ENCODE measurements at regions of chr22 and their contacts with region 1.

Region 1: DNA sequence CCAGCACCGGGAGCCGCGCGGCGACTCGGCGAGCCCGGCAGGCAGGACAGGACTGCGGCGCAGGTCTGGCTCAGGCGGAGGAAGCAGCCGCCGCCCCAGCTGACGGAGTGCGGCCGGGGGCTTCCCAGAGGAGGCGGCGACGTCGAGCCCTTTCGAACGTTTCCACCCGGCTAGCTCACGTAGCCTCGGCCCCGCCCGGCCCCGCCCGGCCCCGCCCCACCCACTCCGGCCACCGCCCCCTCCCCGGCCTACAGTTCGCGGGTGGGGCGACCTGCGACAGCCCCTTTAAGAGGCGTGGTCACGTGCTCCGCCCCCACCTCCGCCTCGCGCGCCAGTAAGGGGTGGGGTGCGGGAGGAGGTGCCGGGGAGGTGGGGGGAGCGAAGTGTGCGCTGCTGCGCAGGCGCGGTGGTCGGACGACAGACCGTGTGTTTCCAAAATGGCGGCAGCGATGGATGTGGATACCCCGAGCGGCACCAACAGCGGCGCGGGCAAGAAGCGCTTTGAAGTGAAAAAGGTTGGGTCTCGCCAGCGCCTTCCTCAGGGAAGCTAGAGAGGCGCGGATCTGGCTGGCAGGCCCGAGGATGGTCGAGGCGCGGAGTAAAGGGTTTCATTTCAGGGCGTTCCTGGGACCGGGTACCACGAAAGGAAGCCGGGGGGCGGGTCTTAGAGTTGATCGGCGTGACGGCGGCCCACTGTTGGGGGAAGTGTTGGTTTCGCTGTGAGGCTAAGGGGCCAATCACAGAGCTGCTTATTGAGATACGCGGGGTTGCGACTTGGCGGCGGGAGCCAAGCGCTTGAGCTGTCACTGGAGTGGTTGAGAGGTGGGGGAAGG is at the start of gene RBX1:
- DNase-seq: peak; percentile 99
- ATAC-seq: peak; percentile 83
- H3K4me3 Mint-ChIP-seq: peak within 1 kb of the TSS; percentile 100
- H3K27ac Mint-ChIP-seq: peak within 1 kb of the TSS; percentile 100
- H3K4me1 Mint-ChIP-seq: peaks cover 23% of the 10 kb centered on the region
- H3K27me3 Mint-ChIP-seq: no peaks in the 10 kb centered on the region
- total RNA-seq, gene RBX1: 49.9 to 96.6 TPM

Region 2: GRCh38 chr22:40368016-40368415 is 583.2 kb before region 1 on chr22:
- CTCF ChIA-PET with region 1: no interaction called
- POLR2A ChIA-PET with region 1: no interaction called
- intact Hi-C with region 1: loop called in 1 of 2 experiments (anchors 1 kb)
- DNase-seq: no peak
- ATAC-seq: no peak
- H3K4me3 Mint-ChIP-seq: no peak overlapping the region
- H3K27ac Mint-ChIP-seq: no peak overlapping the region
- H3K4me1 Mint-ChIP-seq: peaks cover 19% of the 10 kb centered on the region
- H3K27me3 Mint-ChIP-seq: no peaks in the 10 kb centered on the region

Region 3: DNA sequence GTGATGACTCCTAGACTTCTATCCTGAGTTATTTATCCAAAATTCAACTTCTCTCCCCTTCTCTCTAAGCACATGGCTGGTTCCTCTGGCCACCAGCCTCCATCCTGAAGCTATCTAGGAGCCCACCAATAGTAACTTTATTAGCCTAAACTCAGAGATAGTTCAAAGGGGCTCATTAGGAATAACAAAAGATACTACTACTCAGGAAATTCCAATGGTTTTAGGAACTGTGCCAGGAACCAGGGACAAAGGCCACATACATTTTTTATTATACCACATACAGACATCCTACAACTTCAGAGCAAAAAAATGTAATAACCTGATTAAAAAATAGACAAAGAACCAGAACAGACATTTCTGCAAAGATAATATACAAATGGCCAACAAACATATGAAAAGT is 159.9 kb before region 1 on chr22:
- CTCF ChIA-PET with region 1: no interaction called
- POLR2A ChIA-PET with region 1: no interaction called
- intact Hi-C with region 1: no loop called
- DNase-seq: no peak
- ATAC-seq: no peak
- H3K4me3 Mint-ChIP-seq: no peak overlapping the region
- H3K27ac Mint-ChIP-seq: no peak overlapping the region
- H3K4me1 Mint-ChIP-seq: peaks cover 10% of the 10 kb centered on the region
- H3K27me3 Mint-ChIP-seq: no peaks in the 10 kb centered on the region

Region 4: GRCh38 chr22:40911772-40912171 is 39.4 kb before region 1 on chr22:
- CTCF ChIA-PET with region 1: no interaction called
- POLR2A ChIA-PET with region 1: no interaction called
- intact Hi-C with region 1: no loop called
- DNase-seq: no peak
- ATAC-seq: no peak
- H3K4me3 Mint-ChIP-seq: no peak overlapping the region
- H3K27ac Mint-ChIP-seq: no peak overlapping the region
- H3K4me1 Mint-ChIP-seq: no peaks in the 10 kb centered on the region
- H3K27me3 Mint-ChIP-seq: no peaks in the 10 kb centered on the region

Region 5: DNA sequence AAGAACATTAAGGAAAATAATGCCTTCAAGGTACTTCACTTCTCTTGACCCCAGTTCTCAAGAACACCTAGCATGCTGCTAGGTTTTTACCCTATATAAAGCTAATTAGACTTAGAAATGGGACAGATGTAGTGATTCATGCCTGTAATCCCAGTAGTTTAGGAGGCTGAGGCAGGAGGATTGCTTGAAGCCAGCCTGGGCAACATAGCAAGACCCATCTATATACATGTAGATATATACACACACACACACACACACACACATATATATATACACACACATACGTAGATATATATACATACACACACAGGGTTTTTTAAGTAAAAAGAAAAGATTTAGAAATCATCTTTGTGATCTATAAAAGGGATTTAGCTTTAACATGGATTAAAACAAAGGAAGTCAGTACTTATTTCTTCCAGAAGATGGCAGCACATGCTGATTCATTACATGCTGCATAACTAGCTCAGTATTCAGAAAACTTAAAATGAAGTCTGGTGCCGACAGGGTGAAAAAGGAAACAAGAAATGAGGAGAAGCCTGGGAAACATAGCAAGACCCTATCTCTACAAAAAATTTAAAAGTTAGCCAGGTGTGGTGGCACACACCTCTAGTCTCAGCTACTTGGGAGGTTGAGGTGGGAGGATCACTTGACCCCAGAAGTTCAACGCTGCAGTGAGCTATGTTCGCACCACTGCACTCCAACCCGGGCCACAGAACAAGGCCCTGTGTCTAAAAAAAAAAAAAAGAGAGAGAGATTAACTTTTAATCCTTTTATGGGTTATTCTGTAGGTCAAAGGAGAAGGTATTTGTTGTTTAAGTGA is 28.5 kb before region 1 on chr22:
- CTCF ChIA-PET with region 1: interaction called, 17 read pairs
- POLR2A ChIA-PET with region 1: interaction called, 6 read pairs
- intact Hi-C with region 1: no loop called
- DNase-seq: no peak
- ATAC-seq: peak; percentile 86
- H3K4me3 Mint-ChIP-seq: peak overlapping the region; percentile 29
- H3K27ac Mint-ChIP-seq: no peak overlapping the region
- H3K4me1 Mint-ChIP-seq: peaks cover 4% of the 10 kb centered on the region
- H3K27me3 Mint-ChIP-seq: no peaks in the 10 kb centered on the region

Region 6: DNA sequence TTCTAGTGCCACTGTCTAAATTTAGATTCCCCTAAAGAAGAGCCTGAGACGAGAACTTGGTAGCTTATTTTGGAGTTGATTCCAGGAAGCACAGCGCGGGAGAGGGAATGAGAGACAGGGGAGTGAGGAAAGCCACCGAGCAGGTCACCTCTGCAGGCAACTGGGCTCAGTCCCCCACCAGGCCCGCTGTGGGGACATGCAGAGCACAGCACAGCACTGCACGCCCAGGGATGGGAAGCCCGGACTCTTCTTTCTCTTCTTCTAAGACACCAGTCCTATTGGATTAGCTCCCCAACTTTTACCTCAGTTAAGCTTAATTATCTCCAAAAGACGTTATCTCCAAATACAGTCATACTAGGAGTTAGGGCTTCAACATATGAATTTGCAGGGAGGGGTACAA is 28.7 kb after region 1 on chr22:
- CTCF ChIA-PET with region 1: no interaction called
- POLR2A ChIA-PET with region 1: no interaction called
- intact Hi-C with region 1: no loop called
- DNase-seq: no peak
- ATAC-seq: no peak
- H3K4me3 Mint-ChIP-seq: no peak overlapping the region
- H3K27ac Mint-ChIP-seq: no peak overlapping the region
- H3K4me1 Mint-ChIP-seq: no peaks in the 10 kb centered on the region
- H3K27me3 Mint-ChIP-seq: no peaks in the 10 kb centered on the region

Region 7: GRCh38 chr22:41197038-41197972 is 246.1 kb after region 1 on chr22:
- CTCF ChIA-PET with region 1: no interaction called
- POLR2A ChIA-PET with region 1: no interaction called
- intact Hi-C with region 1: loop called (anchors 1 to 10 kb)
- DNase-seq: peak; percentile 89
- ATAC-seq: peak; percentile 82
- H3K4me3 Mint-ChIP-seq: peak overlapping the region; percentile 77
- H3K27ac Mint-ChIP-seq: no peak overlapping the region
- H3K4me1 Mint-ChIP-seq: peaks cover 11% of the 10 kb centered on the region
- H3K27me3 Mint-ChIP-seq: no peaks in the 10 kb centered on the region

Region 8: DNA sequence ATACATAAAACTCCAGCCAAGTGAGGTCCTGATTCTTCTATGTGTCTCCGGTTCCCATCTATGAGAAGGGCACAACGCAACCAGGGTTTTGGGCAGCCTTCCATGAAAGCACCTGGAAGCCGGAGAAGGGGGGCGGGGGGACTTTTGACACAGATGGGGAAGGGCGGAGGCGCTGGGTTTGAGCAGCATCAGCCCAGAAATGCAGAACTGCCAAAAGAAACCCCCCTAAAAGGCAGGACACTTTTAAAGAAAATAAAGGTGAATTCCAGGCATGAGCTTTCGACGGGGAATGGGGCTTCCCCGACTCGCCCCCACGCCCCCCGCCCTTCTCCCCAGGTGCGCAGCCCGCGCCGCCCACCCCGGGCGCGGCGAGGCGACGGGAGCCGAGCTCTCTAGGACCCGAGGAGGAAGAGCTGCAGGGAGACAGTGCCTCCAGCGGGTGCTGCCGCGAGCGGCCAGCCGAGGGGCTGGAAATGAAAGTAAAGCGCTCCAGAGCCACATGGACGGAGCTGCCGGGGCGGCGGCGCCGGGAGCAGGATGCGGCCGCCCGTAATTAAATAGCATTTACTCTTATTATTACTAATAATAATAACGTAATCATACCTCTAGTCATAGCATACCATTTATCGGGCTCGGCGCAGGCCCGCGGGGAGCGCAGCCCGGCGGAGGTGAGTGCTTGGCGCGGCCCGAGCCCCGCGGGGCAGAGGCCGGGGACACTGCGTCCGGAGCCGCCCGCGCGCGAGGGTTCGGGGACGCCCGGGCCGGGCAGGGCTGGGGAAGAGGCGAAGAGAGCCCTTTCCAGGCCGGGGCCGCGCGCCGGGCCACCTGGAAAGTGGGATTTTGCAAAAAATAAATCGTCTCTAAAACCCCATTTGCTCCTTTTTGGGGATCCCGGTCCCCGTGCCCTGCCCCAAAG is 350.2 kb after region 1 on chr22 and contains the start of gene ZC3H7B:
- CTCF ChIA-PET with region 1: no interaction called
- POLR2A ChIA-PET with region 1: no interaction called
- intact Hi-C with region 1: loop called in 1 of 2 experiments (anchors 1 kb)
- DNase-seq: peak; percentile 92
- ATAC-seq: peak; percentile 96
- H3K4me3 Mint-ChIP-seq: peak within 1 kb of the TSS; percentile 74
- H3K27ac Mint-ChIP-seq: peak within 1 kb of the TSS; percentile 76
- H3K4me1 Mint-ChIP-seq: peaks cover 31% of the 10 kb centered on the region
- H3K27me3 Mint-ChIP-seq: no peaks in the 10 kb centered on the region
- total RNA-seq, gene ZC3H7B: 41.7 to 43.4 TPM

Region 9: GRCh38 chr22:41543854-41544670 is 592.9 kb after region 1 on chr22 and contains the start of gene POLR3H:
- CTCF ChIA-PET with region 1: no interaction called
- POLR2A ChIA-PET with region 1: no interaction called
- intact Hi-C with region 1: loop called in 1 of 2 experiments (anchors 1 kb)
- DNase-seq: peak; percentile 99
- ATAC-seq: peak; percentile 99
- H3K4me3 Mint-ChIP-seq: peak within 1 kb of the TSS; percentile 81
- H3K27ac Mint-ChIP-seq: peak within 1 kb of the TSS; percentile 90
- H3K4me1 Mint-ChIP-seq: peaks cover 40% of the 10 kb centered on the region
- H3K27me3 Mint-ChIP-seq: no peaks in the 10 kb centered on the region
- total RNA-seq, gene POLR3H: 18.3 to 24.6 TPM

Region 10: GRCh38 chr22:42856865-42857704 is 1905.9 kb after region 1 on chr22 and contains the start of gene ARFGAP3:
- CTCF ChIA-PET with region 1: no interaction called
- POLR2A ChIA-PET with region 1: no interaction called
- intact Hi-C with region 1: loop called in 1 of 2 experiments (anchors 5 kb)
- DNase-seq: peak; percentile 98
- ATAC-seq: peak; percentile 91
- H3K4me3 Mint-ChIP-seq: peak within 1 kb of the TSS; percentile 83
- H3K27ac Mint-ChIP-seq: peak within 1 kb of the TSS; percentile 85
- H3K4me1 Mint-ChIP-seq: peaks cover 11% of the 10 kb centered on the region
- H3K27me3 Mint-ChIP-seq: peaks cover 6% of the 10 kb centered on the region
- total RNA-seq, gene ARFGAP3: 22.5 to 23.0 TPM